Gastrocnemius medialis (tissue), 4 donors: ENCODE measurements at regions of chrX and their contacts with region 1.

Region 1: DNA sequence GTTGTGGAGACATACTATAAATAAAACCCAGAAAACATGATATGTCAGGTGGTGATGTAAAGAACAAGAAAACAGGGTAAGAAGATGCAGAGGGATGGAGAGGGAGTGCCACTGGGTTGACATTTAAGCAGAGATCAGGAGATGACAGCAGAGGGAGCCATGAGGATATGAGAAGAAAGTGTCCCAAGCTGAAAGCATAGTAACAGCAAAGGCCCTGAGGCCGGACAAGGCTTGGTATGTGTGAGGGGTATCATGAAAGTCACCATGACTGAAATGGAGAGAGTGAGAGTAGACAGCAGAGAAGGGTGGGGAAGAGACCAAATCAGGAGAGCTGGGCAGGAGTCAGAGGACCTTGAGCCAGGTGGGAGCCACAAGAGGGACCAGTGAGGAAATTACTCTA is 3.4 kb downstream of the GPKOW start:
- DNase-seq: no peak
- ATAC-seq: no peak
- H3K4me3 ChIP-seq: no peak overlapping the region
- H3K27ac ChIP-seq: no peak overlapping the region
- H3K4me1 ChIP-seq: peaks cover 2 to 6% of the 10 kb centered on the region in 2 donors
- H3K27me3 ChIP-seq: no peaks in the 10 kb centered on the region
- CTCF ChIP-seq: no peak
- POLR2A ChIP-seq: no peak

Region 2: GRCh38 chrX:49139713-49140112 is 19.6 kb after region 1 on chrX:
- in situ Hi-C with region 1: no loop called
- intact Hi-C with region 1: no loop called
- DNase-seq: no peak
- ATAC-seq: no peak
- H3K4me3 ChIP-seq: no peak overlapping the region
- H3K27ac ChIP-seq: no peak overlapping the region
- H3K4me1 ChIP-seq: no peaks in the 10 kb centered on the region
- H3K27me3 ChIP-seq: no peaks in the 10 kb centered on the region
- CTCF ChIP-seq: no peak
- POLR2A ChIP-seq: no peak

Region 3: GRCh38 chrX:49155900-49156837 is 36.1 kb after region 1 on chrX:
- in situ Hi-C with region 1: no loop called
- intact Hi-C with region 1: loop called (anchors 2 kb)
- DNase-seq: peak; percentile 72 to 86
- ATAC-seq: peak; percentile 84 to 92
- H3K4me3 ChIP-seq: peak overlapping the region; percentile 60 to 69 (median 66)
- H3K27ac ChIP-seq: peak overlapping the region; percentile 89 to 96 (median 94)
- H3K4me1 ChIP-seq: peaks cover 0 to 4% of the 10 kb centered on the region in 2 donors
- H3K27me3 ChIP-seq: no peaks in the 10 kb centered on the region
- CTCF ChIP-seq: peak; percentile 57 to 85 (median 82)
- POLR2A ChIP-seq: peak; percentile 36 to 47